ENCODE measurements at regions of chr10 and their contacts with region 1.

Region 1: DNA sequence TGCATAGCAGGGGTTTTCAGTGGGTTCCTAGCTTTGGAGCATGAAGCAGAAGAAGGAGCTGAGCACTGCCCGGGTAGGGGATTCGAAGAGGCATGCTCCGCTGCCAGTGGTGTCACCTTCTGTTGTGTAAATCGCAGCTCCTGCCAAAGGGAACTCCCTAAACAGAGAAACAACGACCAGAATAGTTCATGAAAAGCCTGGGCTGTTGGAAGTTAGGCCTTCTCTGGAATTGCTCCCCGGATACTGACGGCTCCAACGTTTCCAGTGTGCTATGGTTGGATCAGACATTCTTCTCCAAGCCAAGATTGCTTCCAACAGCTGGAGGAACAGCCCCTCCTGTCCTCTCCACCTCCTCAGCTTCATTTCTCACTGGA is 546.0 kb upstream of the FZD8 start:
- DNase-seq: no peak
- H3K4me3 ChIP-seq: no peak overlapping the region
- H3K27ac ChIP-seq: no peak overlapping the region
- H3K4me1 ChIP-seq: no peaks in the 10 kb centered on the region
- CTCF ChIP-seq: no peak

Region 2: GRCh38 chr10:35700487-35700882 is 487.6 kb before region 1 on chr10:
- CTCF ChIA-PET with region 1: no interaction called
- POLR2A ChIA-PET with region 1: no interaction called
- intact Hi-C with region 1: loop called (anchors 5 kb)
- DNase-seq: no peak
- H3K4me3 ChIP-seq: no peak overlapping the region
- H3K27ac ChIP-seq: no peak overlapping the region
- H3K4me1 ChIP-seq: no peaks in the 10 kb centered on the region
- CTCF ChIP-seq: no peak

Measured in OCI-LY7 (cell line).